Heart left ventricle (tissue), 16 donors: ENCODE measurements at regions of chr19 and their contacts with region 1.

Region 1: GRCh38 chr19:9667898-9668297 is 7.0 kb downstream of the ZNF562 start:
- DNase-seq: no peak
- ATAC-seq: no peak
- H3K4me3 ChIP-seq: no peak overlapping the region
- H3K27ac ChIP-seq: no peak overlapping the region
- H3K4me1 ChIP-seq: peaks cover 0 to 4% (median 0%) of the 10 kb centered on the region in 12 donors
- H3K27me3 ChIP-seq: no peaks in the 10 kb centered on the region
- CTCF ChIP-seq: no peak
- POLR2A ChIP-seq: no peak

Region 2: GRCh38 chr19:8910775-8911414 is 757.0 kb before region 1 on chr19:
- intact Hi-C with region 1: no loop called
- DNase-seq: no peak
- ATAC-seq: no peak
- H3K4me3 ChIP-seq: no peak overlapping the region
- H3K27ac ChIP-seq: no peak overlapping the region
- H3K4me1 ChIP-seq: no peaks in the 10 kb centered on the region
- H3K27me3 ChIP-seq: no peaks in the 10 kb centered on the region
- CTCF ChIP-seq: no peak
- POLR2A ChIP-seq: no peak

Region 3: DNA sequence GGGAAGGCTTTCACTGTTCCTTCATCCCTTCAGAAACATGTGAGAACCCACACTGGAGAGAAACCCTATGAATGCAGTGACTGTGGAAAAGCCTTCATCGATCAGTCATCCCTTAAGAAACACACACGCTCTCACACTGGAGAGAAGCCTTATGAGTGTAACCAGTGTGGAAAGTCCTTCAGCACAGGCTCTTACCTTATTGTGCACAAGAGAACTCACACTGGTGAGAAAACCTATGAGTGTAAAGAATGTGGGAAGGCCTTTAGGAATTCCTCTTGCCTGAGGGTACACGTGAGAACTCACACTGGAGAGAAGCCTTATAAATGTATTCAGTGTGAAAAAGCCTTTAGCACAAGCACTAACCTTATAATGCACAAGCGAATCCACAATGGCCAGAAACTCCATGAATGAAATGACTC is 286.5 kb before region 1 on chr19:
- intact Hi-C with region 1: no loop called
- DNase-seq: no peak
- ATAC-seq: no peak
- H3K4me3 ChIP-seq: no peak overlapping the region
- H3K27ac ChIP-seq: no peak overlapping the region
- H3K4me1 ChIP-seq: no peaks in the 10 kb centered on the region
- H3K27me3 ChIP-seq: no peaks in the 10 kb centered on the region
- CTCF ChIP-seq: no peak
- POLR2A ChIP-seq: no peak

Region 4: DNA sequence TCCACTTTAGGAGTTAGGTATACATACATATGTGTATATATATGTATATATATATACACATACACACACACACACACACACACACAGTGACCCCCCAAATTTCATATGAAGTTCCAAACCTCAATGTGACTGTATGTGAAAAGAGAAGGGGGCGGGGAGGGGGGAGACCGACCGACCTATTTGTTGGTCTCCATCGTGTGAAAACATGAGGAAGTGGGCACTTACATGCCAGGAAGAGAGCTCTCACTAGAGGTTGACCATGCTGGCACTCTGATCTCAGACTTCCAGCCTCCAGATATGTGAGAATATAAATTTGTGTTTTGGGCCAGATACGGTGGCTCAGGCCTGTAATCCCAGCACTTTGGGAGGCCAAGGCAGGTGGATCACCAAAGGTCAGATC is 17.6 kb before region 1 on chr19:
- intact Hi-C with region 1: no loop called
- DNase-seq: no peak
- ATAC-seq: no peak
- H3K4me3 ChIP-seq: no peak overlapping the region
- H3K27ac ChIP-seq: no peak overlapping the region
- H3K4me1 ChIP-seq: no peaks in the 10 kb centered on the region
- H3K27me3 ChIP-seq: no peaks in the 10 kb centered on the region
- CTCF ChIP-seq: no peak
- POLR2A ChIP-seq: no peak

Region 5: DNA sequence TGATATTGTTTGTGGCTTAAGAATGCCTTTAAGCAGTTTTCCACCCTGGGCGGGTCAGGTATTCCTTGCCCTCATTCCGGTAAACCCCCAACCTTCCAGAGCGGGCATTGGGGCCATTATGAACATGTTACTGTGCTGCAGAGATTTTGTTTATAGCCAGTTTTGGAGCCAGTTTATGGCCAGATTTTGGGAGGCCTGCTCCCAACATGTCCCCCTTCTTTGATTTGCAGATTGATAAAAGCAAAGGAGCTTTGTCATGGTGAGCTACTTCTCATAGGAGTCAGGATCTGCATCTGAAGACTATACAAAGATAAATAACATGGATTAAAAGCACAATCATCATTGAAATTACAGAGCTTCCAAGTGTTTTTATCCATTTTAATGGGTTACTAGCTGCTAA is 43.9 kb after region 1 on chr19:
- intact Hi-C with region 1: loop called in 1 of 10 experiments (anchors 2 kb)
- DNase-seq: no peak
- ATAC-seq: no peak
- H3K4me3 ChIP-seq: no peak overlapping the region
- H3K27ac ChIP-seq: no peak overlapping the region
- H3K4me1 ChIP-seq: peaks cover 0 to 3% (median 0%) of the 10 kb centered on the region in 12 donors
- H3K27me3 ChIP-seq: no peaks in the 10 kb centered on the region
- CTCF ChIP-seq: no peak
- POLR2A ChIP-seq: no peak

Region 6: GRCh38 chr19:10625003-10625776 is 957.3 kb after region 1 on chr19 and contains the start of gene SLC44A2:
- intact Hi-C with region 1: no loop called
- DNase-seq: peak; percentile 87 to 89 (median 89)
- ATAC-seq: peak; percentile 95 to 99 (median 98)
- H3K4me3 ChIP-seq: peak within 1 kb of the TSS; percentile 41 to 83 (median 65)
- H3K27ac ChIP-seq: peak within 1 kb of the TSS in 11 of 12 donors; percentile 63 to 94 (median 79)
- H3K4me1 ChIP-seq: peaks cover 0 to 30% (median 16%) of the 10 kb centered on the region in 12 donors
- H3K27me3 ChIP-seq: no peaks in the 10 kb centered on the region
- CTCF ChIP-seq: no peak
- POLR2A ChIP-seq: peak in 1 of 2 donors; percentile 48
- total RNA-seq, gene SLC44A2: 63.8 to 130 (median 91.9) TPM